ENCODE measurements at regions of chr5 and their contacts with region 1.

Region 1: GRCh38 chr5:36414869-36415282 is 113.2 kb upstream of the RANBP3L start:
- DNase-seq: peak; percentile 58

Region 2: GRCh38 chr5:36614657-36615308 is 199.9 kb after region 1 on chr5:
- in situ Hi-C with region 1: no loop called
- DNase-seq: no peak

Region 3: GRCh38 chr5:36690041-36690961 is 275.4 kb after region 1 on chr5:
- in situ Hi-C with region 1: loop called (anchors 10 kb)
- DNase-seq: peak; percentile 91